Activated CD4-positive, alpha-beta T cell treated with anti-CD3 and anti-CD28 coated beads for 36 hours (primary cell): ENCODE measurements at regions of chr12 and their contacts with region 1.

Region 1: DNA sequence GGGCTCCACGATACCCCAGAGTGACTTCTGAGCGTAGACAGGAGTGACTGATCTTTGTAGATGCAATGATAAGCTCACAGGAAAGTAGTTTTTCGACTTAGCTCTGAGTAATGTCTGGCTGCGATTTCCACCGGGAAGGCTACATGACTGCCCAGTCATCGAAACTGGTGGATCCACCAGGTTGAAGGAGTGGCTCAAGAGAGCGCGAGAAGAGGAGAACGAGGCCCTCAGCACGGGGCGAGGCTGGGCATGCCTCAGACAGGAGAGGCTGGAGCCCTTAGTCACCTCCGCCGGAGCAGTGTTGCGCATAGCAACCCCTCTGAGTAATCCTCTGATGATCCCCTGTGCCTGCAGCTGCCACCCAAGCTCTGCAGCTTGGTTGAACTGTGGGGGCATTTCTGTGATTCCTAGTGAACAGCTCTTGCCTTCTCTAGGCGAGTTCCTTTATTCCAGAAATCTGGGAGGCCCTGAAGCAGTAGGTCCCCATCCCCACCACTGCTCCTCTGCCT is 25.6 kb downstream of the ELK3 start:
- DNase-seq: peak; percentile 39
- ATAC-seq: peak; percentile 28
- H3K4me3 Mint-ChIP-seq: no peak overlapping the region
- H3K27ac Mint-ChIP-seq: no peak overlapping the region
- H3K4me1 Mint-ChIP-seq: peaks cover 38% of the 10 kb centered on the region
- H3K27me3 Mint-ChIP-seq: no peaks in the 10 kb centered on the region

Region 2: GRCh38 chr12:95918194-95918993 is 301.4 kb before region 1 on chr12:
- CTCF ChIA-PET with region 1: interaction called, 5 read pairs
- POLR2A ChIA-PET with region 1: no interaction called
- intact Hi-C with region 1: loop called (anchors 5 to 10 kb)
- DNase-seq: peak; percentile 60
- ATAC-seq: peak; percentile 97
- H3K4me3 Mint-ChIP-seq: no peak overlapping the region
- H3K27ac Mint-ChIP-seq: no peak overlapping the region
- H3K4me1 Mint-ChIP-seq: no peaks in the 10 kb centered on the region
- H3K27me3 Mint-ChIP-seq: no peaks in the 10 kb centered on the region

Region 3: DNA sequence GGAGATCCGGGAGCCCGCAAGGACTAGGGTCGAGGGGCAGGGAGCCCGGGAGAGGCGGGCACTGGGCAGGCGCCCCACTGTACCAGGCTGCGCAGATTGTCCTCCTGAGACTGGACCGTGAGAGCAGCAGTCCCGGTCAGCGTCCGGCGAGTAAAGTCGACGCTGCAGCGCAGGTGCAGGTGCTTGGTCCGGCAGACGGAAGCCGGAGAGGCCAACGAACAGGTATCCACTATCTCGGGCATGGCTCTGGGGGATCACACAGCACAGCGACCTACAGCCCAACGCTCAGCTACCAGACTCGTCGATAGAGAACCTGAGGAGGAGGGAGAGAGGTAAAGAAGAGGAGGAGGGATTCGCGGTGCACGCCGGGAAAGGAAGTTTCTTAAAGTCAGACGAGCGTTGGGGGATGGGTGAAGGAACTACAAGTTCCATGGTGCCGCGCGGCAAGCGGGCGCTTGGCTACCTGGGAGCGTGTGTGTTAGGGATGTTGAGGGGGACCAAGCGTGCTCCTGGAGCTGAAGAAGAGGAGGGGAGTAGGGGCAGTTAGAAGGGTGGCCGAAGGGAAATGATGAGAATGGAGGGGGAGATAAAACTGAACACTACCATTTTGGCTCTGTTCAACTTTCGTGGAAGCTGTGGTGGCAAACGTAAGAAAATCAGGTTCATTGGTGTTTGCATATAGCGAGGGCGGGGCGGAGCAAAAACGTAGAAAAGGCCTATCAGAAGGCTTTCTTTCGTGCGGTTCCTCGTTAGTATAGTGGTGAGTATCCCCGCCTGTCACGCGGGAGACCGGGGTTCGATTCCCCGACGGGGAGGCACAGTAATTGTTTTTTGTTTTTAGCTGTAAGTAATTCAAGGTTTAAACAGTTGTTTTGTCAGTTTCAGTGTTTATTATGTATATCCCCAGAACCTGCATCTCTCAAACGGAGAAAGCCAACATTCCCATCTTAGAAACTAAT is 184.2 kb before region 1 on chr12 and contains the start of gene LTA4H:
- CTCF ChIA-PET with region 1: interaction called, 14 read pairs
- POLR2A ChIA-PET with region 1: interaction called, 4 read pairs
- intact Hi-C with region 1: loop called in 1 of 2 experiments (anchors 1 kb)
- DNase-seq: peak; percentile 98
- ATAC-seq: peak; percentile 95
- H3K4me3 Mint-ChIP-seq: no peak within 1 kb of the TSS
- H3K27ac Mint-ChIP-seq: no peak within 1 kb of the TSS
- H3K4me1 Mint-ChIP-seq: peaks cover 13% of the 10 kb centered on the region
- H3K27me3 Mint-ChIP-seq: no peaks in the 10 kb centered on the region
- total RNA-seq, gene LTA4H: 138 to 147 TPM

Region 4: DNA sequence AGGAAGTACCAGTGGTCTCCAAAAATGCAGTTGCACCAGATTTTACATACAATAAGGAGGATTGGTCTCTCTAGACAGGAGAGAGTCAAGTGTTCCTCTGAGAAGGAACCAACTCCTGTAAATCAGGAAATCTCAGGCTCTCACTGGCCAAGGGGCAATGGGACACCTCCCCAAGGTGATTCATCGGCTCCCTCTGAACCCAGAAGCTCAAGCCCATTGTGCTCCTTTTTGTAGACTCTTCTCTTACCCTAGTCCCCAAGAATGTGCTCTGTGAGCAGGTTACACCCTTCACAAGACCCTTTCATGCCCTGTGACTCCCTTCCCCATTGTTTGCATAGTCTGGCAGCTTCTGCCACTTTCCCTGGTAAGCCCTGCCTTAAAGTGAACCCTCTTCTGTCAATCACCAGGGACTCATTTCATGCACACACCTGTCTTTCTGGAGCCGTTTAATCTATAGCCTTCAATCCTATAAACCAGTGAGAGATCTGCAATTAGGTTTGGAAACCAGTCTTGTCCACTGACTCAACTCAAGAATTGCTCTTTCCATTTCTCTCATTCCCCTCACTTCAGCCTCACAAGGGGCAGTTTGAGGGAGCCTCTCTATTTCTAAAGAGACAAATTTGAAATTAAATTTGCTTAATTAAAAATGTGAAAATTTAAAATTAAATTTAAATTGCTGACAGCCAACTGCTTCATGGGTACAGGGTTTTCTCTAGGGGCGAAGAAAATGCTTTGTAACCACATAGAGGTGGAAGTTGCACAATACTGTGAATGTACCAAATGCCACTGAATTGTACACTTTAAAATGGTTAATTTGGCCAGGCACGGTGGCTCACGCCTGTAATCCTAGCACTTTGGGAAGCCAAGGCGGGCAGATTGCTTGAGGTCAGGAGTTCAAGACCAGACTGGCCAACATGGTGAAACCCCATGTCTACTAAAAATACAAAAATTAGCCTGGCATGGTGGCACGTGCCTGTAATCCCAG is 146.1 kb before region 1 on chr12:
- CTCF ChIA-PET with region 1: interaction called, 10 read pairs
- POLR2A ChIA-PET with region 1: no interaction called
- intact Hi-C with region 1: no loop called
- DNase-seq: no peak
- ATAC-seq: peak; percentile 60
- H3K4me3 Mint-ChIP-seq: no peak overlapping the region
- H3K27ac Mint-ChIP-seq: no peak overlapping the region
- H3K4me1 Mint-ChIP-seq: peaks cover 16% of the 10 kb centered on the region
- H3K27me3 Mint-ChIP-seq: no peaks in the 10 kb centered on the region

Region 5: GRCh38 chr12:96164951-96165811 is 54.6 kb before region 1 on chr12:
- CTCF ChIA-PET with region 1: no interaction called
- POLR2A ChIA-PET with region 1: no interaction called
- intact Hi-C with region 1: no loop called
- DNase-seq: no peak
- ATAC-seq: no peak
- H3K4me3 Mint-ChIP-seq: no peak overlapping the region
- H3K27ac Mint-ChIP-seq: no peak overlapping the region
- H3K4me1 Mint-ChIP-seq: no peaks in the 10 kb centered on the region
- H3K27me3 Mint-ChIP-seq: no peaks in the 10 kb centered on the region

Region 6: GRCh38 chr12:96194971-96195844 is 24.5 kb before region 1 on chr12:
- CTCF ChIA-PET with region 1: interaction called, 80 read pairs
- POLR2A ChIA-PET with region 1: interaction called, 8 read pairs
- intact Hi-C with region 1: loop called (anchors 1 kb)
- DNase-seq: peak; percentile 86
- ATAC-seq: peak; percentile 73
- H3K4me3 Mint-ChIP-seq: peak overlapping the region; percentile 97
- H3K27ac Mint-ChIP-seq: peak overlapping the region; percentile 100
- H3K4me1 Mint-ChIP-seq: peaks cover 61% of the 10 kb centered on the region
- H3K27me3 Mint-ChIP-seq: no peaks in the 10 kb centered on the region

Region 7: DNA sequence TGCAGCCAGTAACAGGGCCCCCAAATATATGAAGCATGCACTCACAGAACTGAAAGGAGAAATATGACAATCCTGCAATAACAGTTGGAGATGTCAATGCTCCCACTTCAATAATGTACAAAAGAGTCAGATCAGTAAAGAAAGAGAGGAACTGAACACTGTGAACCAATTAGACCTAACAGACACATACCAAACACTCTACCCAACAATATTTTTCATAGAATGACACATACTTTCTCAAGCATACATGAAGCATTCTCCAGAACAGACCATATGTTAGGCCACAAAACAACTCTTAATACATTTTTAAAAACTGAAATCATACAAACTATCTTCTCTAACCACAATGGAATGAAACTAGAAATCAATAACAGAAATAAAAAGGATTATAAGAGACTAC is 54.6 kb after region 1 on chr12:
- CTCF ChIA-PET with region 1: no interaction called
- POLR2A ChIA-PET with region 1: no interaction called
- intact Hi-C with region 1: no loop called
- DNase-seq: no peak
- ATAC-seq: peak; percentile 82
- H3K4me3 Mint-ChIP-seq: no peak overlapping the region
- H3K27ac Mint-ChIP-seq: peak overlapping the region; percentile 76
- H3K4me1 Mint-ChIP-seq: peaks cover 29% of the 10 kb centered on the region
- H3K27me3 Mint-ChIP-seq: no peaks in the 10 kb centered on the region

Region 8: GRCh38 chr12:96516472-96517430 is 297.0 kb after region 1 on chr12:
- CTCF ChIA-PET with region 1: interaction called, 31 read pairs
- POLR2A ChIA-PET with region 1: no interaction called
- intact Hi-C with region 1: loop called (anchors 1 to 2 kb)
- DNase-seq: peak; percentile 94
- ATAC-seq: peak; percentile 83
- H3K4me3 Mint-ChIP-seq: peak overlapping the region; percentile 21
- H3K27ac Mint-ChIP-seq: peak overlapping the region; percentile 64
- H3K4me1 Mint-ChIP-seq: peaks cover 17% of the 10 kb centered on the region
- H3K27me3 Mint-ChIP-seq: no peaks in the 10 kb centered on the region